ENCODE measurements at regions of chr22 and their contacts with region 1.

Region 1: DNA sequence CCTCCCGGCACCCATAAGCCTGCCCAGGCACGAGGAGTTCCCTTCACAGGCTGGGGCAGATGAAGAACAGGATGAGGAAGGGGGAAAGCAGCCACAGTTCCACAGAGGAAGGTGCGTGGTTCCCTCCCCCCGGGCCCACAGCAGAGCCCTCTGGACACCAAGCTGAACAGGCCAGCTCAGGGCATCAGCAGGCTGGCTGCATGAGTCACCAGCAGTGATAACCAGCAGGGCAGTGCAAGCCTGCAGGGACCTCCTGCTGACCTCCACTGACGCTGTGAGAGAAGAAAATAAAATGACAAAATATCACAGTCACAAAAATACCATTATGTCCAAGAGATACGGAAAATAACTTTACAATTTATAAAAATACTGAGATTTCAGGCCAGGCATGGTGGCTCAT is 11.5 kb downstream of the RTL6 start:
- DNase-seq: no peak
- H3K4me3 ChIP-seq: no peak overlapping the region
- H3K27ac ChIP-seq: no peak overlapping the region
- H3K4me1 ChIP-seq: no peaks in the 10 kb centered on the region
- H3K27me3 ChIP-seq: no peaks in the 10 kb centered on the region
- CTCF ChIP-seq: no peak
- POLR2A ChIP-seq: no peak

Region 2: DNA sequence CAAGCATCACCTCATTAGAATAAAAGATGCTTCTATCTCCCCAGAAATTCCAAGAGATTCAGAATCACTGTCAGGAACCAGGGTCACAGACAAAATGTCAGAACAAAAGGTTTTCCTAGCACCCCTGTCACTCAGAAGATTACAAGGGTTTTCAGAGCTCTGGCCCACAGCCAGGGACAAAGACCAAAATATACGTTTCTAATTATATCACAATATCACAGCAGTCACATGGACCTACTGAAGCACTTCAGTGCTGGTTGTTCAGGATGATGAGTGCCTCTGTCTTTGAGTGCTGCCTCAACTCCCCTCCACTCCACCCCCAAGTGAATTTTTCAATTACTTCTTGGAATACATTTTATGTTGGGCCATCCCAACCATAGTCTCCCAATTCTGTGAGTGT is 33.3 kb after region 1 on chr22:
- CTCF ChIA-PET with region 1: no interaction called
- POLR2A ChIA-PET with region 1: no interaction called
- dilution Hi-C with region 1: no loop called
- intact Hi-C with region 1: no loop called
- DNase-seq: no peak
- H3K4me3 ChIP-seq: no peak overlapping the region
- H3K27ac ChIP-seq: no peak overlapping the region
- H3K4me1 ChIP-seq: no peaks in the 10 kb centered on the region
- H3K27me3 ChIP-seq: no peaks in the 10 kb centered on the region
- CTCF ChIP-seq: no peak
- POLR2A ChIP-seq: no peak

Region 3: GRCh38 chr22:44595841-44596341 is 109.4 kb after region 1 on chr22:
- CTCF ChIA-PET with region 1: no interaction called
- POLR2A ChIA-PET with region 1: no interaction called
- dilution Hi-C with region 1: no loop called
- intact Hi-C with region 1: loop called (anchors 1 kb)
- DNase-seq: peak; percentile 21
- H3K4me3 ChIP-seq: no peak overlapping the region
- H3K27ac ChIP-seq: no peak overlapping the region
- H3K4me1 ChIP-seq: no peaks in the 10 kb centered on the region
- H3K27me3 ChIP-seq: peaks cover 0 to 3% of the 10 kb centered on the region in 2 experiments
- CTCF ChIP-seq: no peak
- POLR2A ChIP-seq: no peak